HCT116 (cell line): ENCODE measurements at regions of chr6 and their contacts with region 1.

Region 1: DNA sequence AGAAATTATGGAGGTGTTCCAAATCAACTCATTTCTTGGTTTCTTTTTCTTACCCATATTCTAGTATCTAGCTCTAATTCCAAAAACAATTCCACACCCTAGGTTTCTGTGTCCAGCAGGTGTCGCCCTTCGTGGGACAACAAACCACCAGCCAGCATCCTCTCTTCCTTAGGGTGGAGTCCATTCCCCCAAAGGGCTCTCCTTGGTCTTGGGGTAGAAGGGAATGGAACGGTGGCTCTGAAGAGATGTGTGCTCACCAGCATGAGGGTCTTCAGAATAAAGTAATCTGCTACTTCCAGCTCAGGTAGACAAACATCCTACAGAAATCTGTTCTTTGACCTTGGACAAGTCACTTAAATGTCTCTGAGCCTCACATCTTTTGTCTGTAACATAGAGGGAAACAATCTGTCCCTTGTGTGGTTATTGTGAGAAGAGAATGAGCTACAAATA is 7.2 kb downstream of the HLA-DMB start:
- DNase-seq: peak; percentile 56
- ATAC-seq: peak; percentile 92
- H3K4me3 ChIP-seq: no peak overlapping the region
- H3K27ac ChIP-seq: no peak overlapping the region
- H3K4me1 ChIP-seq: no peaks in the 10 kb centered on the region; a peak in 1 of 4 replicates
- H3K27me3 ChIP-seq: no peaks in the 10 kb centered on the region
- CTCF ChIP-seq: peak; percentile 82 to 90 (median 90)
- POLR2A ChIP-seq: no peak
- RAD21 ChIP-seq: peak; percentile 74

Region 2: GRCh38 chr6:32642720-32643106 is 290.9 kb before region 1 on chr6:
- CTCF ChIA-PET with region 1: no interaction called
- POLR2A ChIA-PET with region 1: no interaction called
- RAD21 ChIA-PET with region 1: no interaction called
- intact Hi-C with region 1: no loop called
- DNase-seq: no peak
- ATAC-seq: no peak
- H3K4me3 ChIP-seq: no peak overlapping the region
- H3K27ac ChIP-seq: no peak overlapping the region
- H3K4me1 ChIP-seq: no peaks in the 10 kb centered on the region
- H3K27me3 ChIP-seq: no peaks in the 10 kb centered on the region
- CTCF ChIP-seq: no peak
- POLR2A ChIP-seq: no peak
- RAD21 ChIP-seq: no peak

Region 3: GRCh38 chr6:32894080-32895005 is 39.3 kb before region 1 on chr6:
- CTCF ChIA-PET with region 1: interaction called, 18 read pairs
- POLR2A ChIA-PET with region 1: no interaction called
- RAD21 ChIA-PET with region 1: no interaction called
- intact Hi-C with region 1: loop called (anchors 5 kb)
- DNase-seq: peak; percentile 85
- ATAC-seq: peak; percentile 100
- H3K4me3 ChIP-seq: peak overlapping the region; percentile 71 to 72
- H3K27ac ChIP-seq: peak overlapping the region; percentile 72
- H3K4me1 ChIP-seq: peaks cover 4 to 16% of the 10 kb centered on the region in 2 experiments; a peak in 3 of 4 replicates
- H3K27me3 ChIP-seq: no peaks in the 10 kb centered on the region
- CTCF ChIP-seq: no peak
- POLR2A ChIP-seq: no peak
- RAD21 ChIP-seq: no peak

Region 4: GRCh38 chr6:32912951-32913350 is 20.7 kb before region 1 on chr6:
- CTCF ChIA-PET with region 1: interaction called, 14 read pairs
- POLR2A ChIA-PET with region 1: no interaction called
- RAD21 ChIA-PET with region 1: no interaction called
- intact Hi-C with region 1: no loop called
- DNase-seq: no peak
- ATAC-seq: no peak
- H3K4me3 ChIP-seq: no peak overlapping the region
- H3K27ac ChIP-seq: no peak overlapping the region
- H3K4me1 ChIP-seq: no peaks in the 10 kb centered on the region
- H3K27me3 ChIP-seq: 0 out of 2 replicates have a peak, but pooled peaks cover 3% of the 10 kb centered on the region
- CTCF ChIP-seq: no peak
- POLR2A ChIP-seq: no peak
- RAD21 ChIP-seq: no peak

Region 5: DNA sequence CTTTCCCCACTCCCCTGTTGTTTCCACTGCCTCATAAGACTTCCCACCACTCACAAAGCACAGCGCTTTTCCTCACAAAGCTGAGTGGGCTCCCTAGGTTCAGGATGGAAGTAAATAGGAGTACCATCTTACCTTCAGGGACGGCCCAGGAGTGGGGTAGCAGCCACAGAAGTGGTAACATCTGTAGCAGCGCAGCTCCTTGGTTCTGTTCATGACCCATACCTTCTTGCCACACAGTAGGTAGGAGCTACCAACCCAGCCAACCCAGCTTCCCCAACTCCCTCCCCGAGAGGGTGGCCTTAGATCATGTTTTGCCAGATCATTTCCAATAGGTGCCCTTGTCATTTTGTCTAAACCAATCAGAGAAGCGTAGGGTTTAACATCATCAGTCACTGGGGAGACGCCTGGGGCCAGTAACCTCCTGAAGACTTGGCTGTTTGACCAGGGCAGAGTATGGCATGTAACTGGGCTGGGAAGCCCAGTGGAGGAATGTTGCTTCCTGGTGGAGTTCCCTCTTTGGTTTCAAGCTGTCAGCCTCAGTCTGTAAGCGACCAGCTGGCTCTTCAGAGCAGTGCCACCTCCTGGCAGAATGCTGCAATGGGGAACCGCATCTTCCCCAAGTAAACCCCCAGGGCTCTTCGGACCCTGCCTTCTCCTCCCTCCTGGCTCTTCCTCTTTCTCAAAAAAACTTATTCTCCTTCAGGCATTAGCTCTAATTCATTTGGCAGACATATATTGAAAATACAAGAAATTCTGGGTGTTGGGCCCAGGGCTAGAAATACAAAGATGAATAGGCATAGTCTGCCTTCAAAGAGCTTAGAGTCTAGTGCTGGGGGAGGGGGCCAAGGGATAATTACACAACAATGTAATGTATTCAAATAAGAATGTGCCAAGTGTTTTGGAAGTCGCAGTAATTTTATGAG is 19.4 kb after region 1 on chr6 and contains the start of gene HLA-DMA:
- CTCF ChIA-PET with region 1: interaction called, 48 read pairs
- POLR2A ChIA-PET with region 1: interaction called, 3 read pairs
- RAD21 ChIA-PET with region 1: no interaction called
- intact Hi-C with region 1: no loop called
- DNase-seq: peak; percentile 81
- ATAC-seq: peak; percentile 95
- H3K4me3 ChIP-seq: no peak within 1 kb of the TSS
- H3K27ac ChIP-seq: no peak within 1 kb of the TSS
- H3K4me1 ChIP-seq: peaks cover 0 to 17% of the 10 kb centered on the region in 2 experiments; a peak in 2 of 4 replicates
- H3K27me3 ChIP-seq: no peaks in the 10 kb centered on the region
- CTCF ChIP-seq: peak; percentile 21 to 69 (median 68); a peak in 5 of 6 replicates
- POLR2A ChIP-seq: no peak
- RAD21 ChIP-seq: peak; percentile 35
- total RNA-seq, gene HLA-DMA: 12.1 TPM

Region 6: DNA sequence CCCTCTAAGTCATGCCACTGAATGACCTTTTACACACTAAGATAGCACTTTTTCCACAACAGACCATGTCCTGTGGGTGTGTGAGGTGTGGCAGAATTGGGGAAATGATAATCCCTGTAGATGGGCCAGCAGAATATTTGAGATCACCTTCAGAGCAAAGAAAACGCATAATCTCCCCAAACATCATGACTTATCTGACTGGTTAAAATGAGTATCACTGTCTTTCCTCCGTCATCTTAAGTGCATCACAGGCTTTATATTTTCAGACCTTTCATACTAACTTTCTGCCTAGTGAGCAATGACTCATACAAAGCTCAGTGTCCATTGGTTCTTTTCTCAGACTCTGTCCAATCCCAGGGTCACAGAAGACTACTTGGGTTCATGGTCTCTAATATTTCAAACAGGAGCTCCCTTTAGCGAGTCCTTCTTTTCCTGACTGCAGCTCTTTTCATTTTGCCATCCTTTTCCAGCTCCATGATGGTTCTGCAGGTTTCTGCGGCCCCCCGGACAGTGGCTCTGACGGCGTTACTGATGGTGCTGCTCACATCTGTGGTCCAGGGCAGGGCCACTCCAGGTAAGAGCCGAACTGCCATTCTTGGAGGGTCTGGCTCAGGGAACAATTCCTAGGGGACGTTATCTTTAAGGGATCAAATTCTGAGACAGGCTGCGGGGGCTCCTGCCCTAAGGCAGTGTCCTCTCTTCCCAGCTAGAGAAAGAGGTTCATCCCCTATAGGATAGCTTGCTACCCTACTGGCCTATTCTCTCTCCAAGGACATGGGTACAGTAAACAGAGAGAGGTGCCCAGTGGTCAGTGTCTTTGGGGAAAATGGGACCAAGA is 142.1 kb after region 1 on chr6 and contains the start of gene HLA-DPB1:
- CTCF ChIA-PET with region 1: no interaction called
- POLR2A ChIA-PET with region 1: no interaction called
- RAD21 ChIA-PET with region 1: no interaction called
- intact Hi-C with region 1: no loop called
- DNase-seq: peak; percentile 52
- ATAC-seq: peak; percentile 93
- H3K4me3 ChIP-seq: no peak within 1 kb of the TSS
- H3K27ac ChIP-seq: no peak within 1 kb of the TSS
- H3K4me1 ChIP-seq: peaks cover 0 to 6% of the 10 kb centered on the region in 2 experiments; a peak in 1 of 4 replicates
- H3K27me3 ChIP-seq: no peaks in the 10 kb centered on the region
- CTCF ChIP-seq: no peak
- POLR2A ChIP-seq: no peak
- RAD21 ChIP-seq: no peak
- total RNA-seq, gene HLA-DPB1: 1.5 TPM

Region 7: DNA sequence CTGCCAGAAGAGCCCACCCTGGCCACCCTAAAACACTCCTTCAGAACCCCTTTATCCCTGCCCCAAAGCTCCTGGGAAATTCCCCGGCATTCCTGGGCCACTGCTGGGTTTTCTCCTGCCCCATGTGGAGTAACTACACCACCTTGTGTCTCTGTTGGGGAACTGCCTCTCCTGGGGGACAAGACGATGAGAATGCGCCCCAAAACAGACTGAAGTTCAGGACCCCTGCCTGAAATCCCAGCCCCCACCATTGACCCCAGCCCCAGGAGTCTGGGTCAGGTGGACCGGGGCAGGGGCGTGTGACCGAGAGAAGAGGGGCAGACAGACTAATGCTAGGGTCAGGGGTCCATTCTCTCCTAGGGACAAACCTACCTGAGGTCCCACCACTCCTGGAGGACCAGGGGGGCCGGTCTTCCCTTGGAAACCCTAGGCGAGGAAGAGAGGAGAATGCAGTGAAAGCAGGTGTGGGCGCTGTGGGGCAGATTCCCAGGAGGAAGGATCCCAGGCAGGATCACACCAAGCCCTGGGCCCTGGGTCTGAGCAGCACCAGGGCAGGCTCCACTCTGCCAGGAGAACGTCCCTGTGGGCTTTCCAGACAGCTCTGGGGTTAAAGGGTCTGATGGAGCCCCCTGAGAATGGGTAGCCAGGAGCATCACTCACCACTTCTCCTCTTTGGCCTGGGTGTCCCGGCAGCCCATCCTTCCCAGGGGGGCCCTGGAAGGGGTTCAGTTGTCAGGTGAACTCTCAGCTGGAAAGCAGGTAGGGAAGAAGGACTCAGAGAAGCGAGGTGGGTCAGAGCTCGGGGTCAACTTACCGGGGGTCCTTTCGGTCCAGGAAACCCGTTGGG is 239.2 kb after region 1 on chr6:
- CTCF ChIA-PET with region 1: no interaction called
- POLR2A ChIA-PET with region 1: no interaction called
- RAD21 ChIA-PET with region 1: no interaction called
- intact Hi-C with region 1: no loop called
- DNase-seq: peak; percentile 13
- ATAC-seq: peak; percentile 51; the same call in 1 of the 2 replicates
- H3K4me3 ChIP-seq: no peak overlapping the region
- H3K27ac ChIP-seq: no peak overlapping the region
- H3K4me1 ChIP-seq: no peaks in the 10 kb centered on the region
- H3K27me3 ChIP-seq: no peaks in the 10 kb centered on the region
- CTCF ChIP-seq: peak; percentile 58 to 66 (median 66)
- POLR2A ChIP-seq: no peak
- RAD21 ChIP-seq: no peak; the same call in none of the 2 replicates